Naive thymus-derived CD4-positive, alpha-beta T cell (primary cell): ENCODE measurements at regions of chr11 and their contacts with region 1.

Region 1: DNA sequence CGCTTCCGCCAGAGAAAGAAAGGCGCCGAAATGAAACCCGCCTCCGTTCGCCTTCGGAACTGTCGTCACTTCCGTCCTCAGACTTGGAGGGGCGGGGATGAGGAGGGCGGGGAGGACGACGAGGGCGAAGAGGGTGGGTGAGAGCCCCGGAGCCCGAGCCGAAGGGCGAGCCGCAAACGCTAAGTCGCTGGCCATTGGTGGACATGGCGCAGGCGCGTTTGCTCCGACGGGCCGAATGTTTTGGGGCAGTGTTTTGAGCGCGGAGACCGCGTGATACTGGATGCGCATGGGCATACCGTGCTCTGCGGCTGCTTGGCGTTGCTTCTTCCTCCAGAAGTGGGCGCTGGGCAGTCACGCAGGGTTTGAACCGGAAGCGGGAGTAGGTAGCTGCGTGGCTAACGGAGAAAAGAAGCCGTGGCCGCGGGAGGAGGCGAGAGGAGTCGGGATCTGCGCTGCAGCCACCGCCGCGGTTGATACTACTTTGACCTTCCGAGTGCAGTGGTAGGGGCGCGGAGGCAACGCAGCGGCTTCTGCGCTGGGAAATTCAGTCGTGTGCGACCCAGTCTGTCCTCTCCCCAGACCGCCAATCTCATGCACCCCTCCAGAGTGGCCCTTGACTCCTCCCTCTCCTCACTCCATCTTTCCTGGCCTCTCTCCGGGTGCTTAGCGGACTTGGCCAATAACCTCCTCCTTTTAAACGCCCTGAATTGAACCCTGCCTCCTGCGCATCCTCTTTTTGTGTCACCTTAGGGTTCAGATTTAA is at the start of gene ATM:
- DNase-seq: peak; percentile 94 to 99 (median 98)
- ATAC-seq: peak; percentile 91
- H3K4me3 ChIP-seq: peak within 1 kb of the TSS; percentile 93
- H3K4me3 Mint-ChIP-seq: no peak within 1 kb of the TSS
- H3K27ac ChIP-seq: peak within 1 kb of the TSS; percentile 98
- H3K27ac Mint-ChIP-seq: no peak within 1 kb of the TSS
- H3K4me1 ChIP-seq: peaks cover 26 to 31% of the 10 kb centered on the region in 2 donors
- H3K4me1 Mint-ChIP-seq: peaks cover 32 to 57% (median 37%) of the 10 kb centered on the region in 7 donors
- H3K27me3 ChIP-seq: no peaks in the 10 kb centered on the region
- H3K27me3 Mint-ChIP-seq: no peaks in the 10 kb centered on the region
- total RNA-seq, gene ATM: 183 to 879 (median 440) TPM

Region 2: GRCh38 chr11:107565219-107565937 is 657.5 kb before region 1 on chr11 and contains the start of gene ALKBH8:
- CTCF ChIA-PET with region 1: no interaction called
- POLR2A ChIA-PET with region 1: no interaction called
- intact Hi-C with region 1: loop called (anchors 5 to 10 kb)
- DNase-seq: peak; percentile 50 to 77 (median 75)
- ATAC-seq: peak; percentile 96
- H3K4me3 ChIP-seq: peak within 1 kb of the TSS; percentile 98
- H3K4me3 Mint-ChIP-seq: peak within 1 kb of the TSS; percentile 87 to 98 (median 94)
- H3K27ac ChIP-seq: peak within 1 kb of the TSS; percentile 73
- H3K27ac Mint-ChIP-seq: peak within 1 kb of the TSS; percentile 87 to 97 (median 90)
- H3K4me1 ChIP-seq: peaks cover 8 to 20% of the 10 kb centered on the region in 2 donors
- H3K4me1 Mint-ChIP-seq: peaks cover 28 to 70% (median 58%) of the 10 kb centered on the region in 7 donors
- H3K27me3 ChIP-seq: no peaks in the 10 kb centered on the region
- H3K27me3 Mint-ChIP-seq: peaks cover 0 to 3% (median 0%) of the 10 kb centered on the region in 5 donors
- total RNA-seq, gene ALKBH8: 9.5 to 19.1 (median 12.6) TPM

Region 3: GRCh38 chr11:107747622-107748021 is 475.2 kb before region 1 on chr11:
- CTCF ChIA-PET with region 1: no interaction called
- POLR2A ChIA-PET with region 1: no interaction called
- intact Hi-C with region 1: no loop called
- DNase-seq: no peak
- ATAC-seq: no peak
- H3K4me3 ChIP-seq: no peak overlapping the region
- H3K4me3 Mint-ChIP-seq: no peak overlapping the region
- H3K27ac ChIP-seq: no peak overlapping the region
- H3K27ac Mint-ChIP-seq: no peak overlapping the region
- H3K4me1 ChIP-seq: no peaks in the 10 kb centered on the region
- H3K4me1 Mint-ChIP-seq: peaks cover 0 to 3% (median 0%) of the 10 kb centered on the region in 7 donors
- H3K27me3 ChIP-seq: no peaks in the 10 kb centered on the region
- H3K27me3 Mint-ChIP-seq: peaks cover 24 to 54% (median 37%) of the 10 kb centered on the region in 5 donors

Region 4: GRCh38 chr11:108084811-108085210 is 138.1 kb before region 1 on chr11:
- CTCF ChIA-PET with region 1: no interaction called
- POLR2A ChIA-PET with region 1: no interaction called
- intact Hi-C with region 1: no loop called
- DNase-seq: no peak
- ATAC-seq: no peak
- H3K4me3 ChIP-seq: no peak overlapping the region
- H3K4me3 Mint-ChIP-seq: no peak overlapping the region
- H3K27ac ChIP-seq: no peak overlapping the region
- H3K27ac Mint-ChIP-seq: no peak overlapping the region
- H3K4me1 ChIP-seq: no peaks in the 10 kb centered on the region
- H3K4me1 Mint-ChIP-seq: peaks cover 0 to 4% (median 2%) of the 10 kb centered on the region in 7 donors
- H3K27me3 ChIP-seq: no peaks in the 10 kb centered on the region
- H3K27me3 Mint-ChIP-seq: no peaks in the 10 kb centered on the region

Region 5: DNA sequence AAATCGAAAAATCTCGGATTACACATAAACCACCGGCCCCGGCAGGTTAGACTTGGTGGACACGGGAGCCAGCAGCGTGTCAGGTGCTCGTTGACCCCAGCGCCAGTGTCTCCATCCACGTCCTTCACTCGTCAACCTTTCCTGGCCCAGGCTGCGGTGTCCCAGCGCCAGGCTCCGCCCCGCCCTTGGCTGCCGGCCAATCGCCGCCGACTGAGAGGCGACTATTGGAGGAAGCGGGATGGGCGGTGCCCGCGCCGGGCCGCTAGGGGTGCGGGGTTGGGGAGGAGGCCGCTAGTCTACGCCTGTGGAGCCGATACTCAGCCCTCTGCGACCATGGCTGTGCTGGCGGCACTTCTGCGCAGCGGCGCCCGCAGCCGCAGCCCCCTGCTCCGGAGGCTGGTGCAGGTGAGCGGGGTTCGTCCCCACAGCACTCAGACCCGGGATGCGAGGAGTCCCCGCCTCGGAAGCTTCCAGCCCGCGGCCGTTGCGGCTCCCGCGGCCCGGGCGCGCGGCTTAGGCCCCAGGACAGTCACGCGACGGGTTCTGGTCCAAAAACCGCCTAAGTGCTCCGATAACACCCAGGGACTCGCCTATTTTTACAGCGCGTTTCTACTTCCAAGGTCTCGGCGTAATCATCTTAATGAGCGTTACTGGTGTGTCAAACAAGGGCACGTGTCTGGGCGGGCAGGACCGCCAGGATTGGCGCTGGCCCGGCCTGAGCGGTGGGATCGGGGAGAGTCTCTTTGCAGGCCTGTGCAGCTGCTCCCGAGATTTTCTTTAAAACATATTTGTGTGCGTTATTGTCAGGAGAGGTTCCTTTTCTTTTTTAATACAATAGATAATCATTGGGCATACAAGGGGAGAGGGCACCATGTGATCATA is 101.4 kb before region 1 on chr11 and contains the start of gene ACAT1:
- CTCF ChIA-PET with region 1: no interaction called
- POLR2A ChIA-PET with region 1: interaction called, 3 read pairs
- intact Hi-C with region 1: loop called (anchors 1 kb)
- DNase-seq: peak; percentile 91 to 98 (median 94)
- ATAC-seq: peak; percentile 100
- H3K4me3 ChIP-seq: peak within 1 kb of the TSS; percentile 88
- H3K4me3 Mint-ChIP-seq: peak within 1 kb of the TSS; percentile 81 to 97 (median 94)
- H3K27ac ChIP-seq: peak within 1 kb of the TSS; percentile 66
- H3K27ac Mint-ChIP-seq: peak within 1 kb of the TSS; percentile 61 to 93 (median 85)
- H3K4me1 ChIP-seq: peaks cover 16 to 20% of the 10 kb centered on the region in 2 donors
- H3K4me1 Mint-ChIP-seq: peaks cover 35 to 49% (median 41%) of the 10 kb centered on the region in 7 donors
- H3K27me3 ChIP-seq: no peaks in the 10 kb centered on the region
- H3K27me3 Mint-ChIP-seq: no peaks in the 10 kb centered on the region
- total RNA-seq, gene ACAT1: 13.0 to 40.2 (median 17.9) TPM

Region 6: GRCh38 chr11:108237058-108237481 is 14.2 kb after region 1 on chr11:
- CTCF ChIA-PET with region 1: interaction called, 104 read pairs
- POLR2A ChIA-PET with region 1: interaction called, 779 read pairs
- intact Hi-C with region 1: loop called (anchors 1 kb)
- DNase-seq: peak in 4 of 9 donors; percentile 31 to 63 (median 50)
- ATAC-seq: peak; percentile 51
- H3K4me3 ChIP-seq: peak overlapping the region; percentile 50
- H3K4me3 Mint-ChIP-seq: peak overlapping the region in 9 of 10 donors; percentile 54 to 89 (median 82)
- H3K27ac ChIP-seq: peak overlapping the region; percentile 74
- H3K27ac Mint-ChIP-seq: peak overlapping the region in 7 of 9 donors; percentile 81 to 97 (median 95)
- H3K4me1 ChIP-seq: peaks cover 75 to 94% of the 10 kb centered on the region in 2 donors
- H3K4me1 Mint-ChIP-seq: peaks cover 53 to 95% (median 79%) of the 10 kb centered on the region in 7 donors
- H3K27me3 ChIP-seq: no peaks in the 10 kb centered on the region
- H3K27me3 Mint-ChIP-seq: no peaks in the 10 kb centered on the region

Region 7: DNA sequence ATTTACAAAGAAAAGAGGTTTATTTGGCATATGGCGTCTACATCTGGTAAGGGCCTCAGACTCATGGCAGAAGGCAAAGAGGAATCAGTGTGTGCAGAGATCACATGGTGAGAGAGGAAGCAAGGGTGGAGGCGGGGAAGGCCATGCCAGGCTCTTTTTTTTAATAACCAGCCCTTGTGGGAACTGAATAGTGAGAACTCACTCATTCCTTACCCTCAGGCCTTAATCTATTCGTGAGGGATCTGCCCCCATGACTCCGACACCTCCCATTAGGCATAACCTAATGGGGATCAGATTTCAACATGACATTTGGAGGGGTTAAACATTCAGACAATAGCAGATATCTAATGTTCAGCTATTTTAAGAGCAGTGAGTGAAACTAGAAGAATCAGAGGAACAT is 55.7 kb after region 1 on chr11:
- CTCF ChIA-PET with region 1: interaction called, 5 read pairs
- POLR2A ChIA-PET with region 1: interaction called, 56 read pairs
- intact Hi-C with region 1: loop called (anchors 1 to 2 kb)
- DNase-seq: no peak
- ATAC-seq: no peak
- H3K4me3 ChIP-seq: no peak overlapping the region
- H3K4me3 Mint-ChIP-seq: peak overlapping the region in 8 of 10 donors; percentile 1 to 68 (median 46)
- H3K27ac ChIP-seq: peak overlapping the region; percentile 37
- H3K27ac Mint-ChIP-seq: peak overlapping the region in 8 of 9 donors; percentile 5 to 90 (median 86)
- H3K4me1 ChIP-seq: peaks cover 0 to 42% of the 10 kb centered on the region in 2 donors
- H3K4me1 Mint-ChIP-seq: peaks cover 25 to 85% (median 79%) of the 10 kb centered on the region in 7 donors
- H3K27me3 ChIP-seq: no peaks in the 10 kb centered on the region
- H3K27me3 Mint-ChIP-seq: no peaks in the 10 kb centered on the region

Region 8: GRCh38 chr11:108393046-108393445 is 170.2 kb after region 1 on chr11:
- CTCF ChIA-PET with region 1: no interaction called
- POLR2A ChIA-PET with region 1: no interaction called
- intact Hi-C with region 1: no loop called
- DNase-seq: no peak
- ATAC-seq: no peak
- H3K4me3 ChIP-seq: no peak overlapping the region
- H3K4me3 Mint-ChIP-seq: no peak overlapping the region
- H3K27ac ChIP-seq: no peak overlapping the region
- H3K27ac Mint-ChIP-seq: no peak overlapping the region
- H3K4me1 ChIP-seq: no peaks in the 10 kb centered on the region
- H3K4me1 Mint-ChIP-seq: no peaks in the 10 kb centered on the region
- H3K27me3 ChIP-seq: no peaks in the 10 kb centered on the region
- H3K27me3 Mint-ChIP-seq: no peaks in the 10 kb centered on the region

Region 9: GRCh38 chr11:108467091-108467823 is 244.4 kb after region 1 on chr11 and contains the start of gene C11orf65:
- CTCF ChIA-PET with region 1: no interaction called
- POLR2A ChIA-PET with region 1: interaction called, 3 read pairs
- intact Hi-C with region 1: loop called (anchors 1 kb)
- DNase-seq: peak; percentile 88 to 97 (median 94)
- ATAC-seq: peak; percentile 98
- H3K4me3 ChIP-seq: peak within 1 kb of the TSS; percentile 81
- H3K4me3 Mint-ChIP-seq: peak within 1 kb of the TSS; percentile 93 to 100 (median 98)
- H3K27ac ChIP-seq: peak within 1 kb of the TSS; percentile 93
- H3K27ac Mint-ChIP-seq: peak within 1 kb of the TSS; percentile 98 to 100 (median 100)
- H3K4me1 ChIP-seq: peaks cover 3 to 5% of the 10 kb centered on the region in 2 donors
- H3K4me1 Mint-ChIP-seq: peaks cover 0 to 27% (median 17%) of the 10 kb centered on the region in 7 donors
- H3K27me3 ChIP-seq: no peaks in the 10 kb centered on the region
- H3K27me3 Mint-ChIP-seq: no peaks in the 10 kb centered on the region
- total RNA-seq, gene C11orf65: 0.27 to 1.5 (median 0.51) TPM

Region 10: DNA sequence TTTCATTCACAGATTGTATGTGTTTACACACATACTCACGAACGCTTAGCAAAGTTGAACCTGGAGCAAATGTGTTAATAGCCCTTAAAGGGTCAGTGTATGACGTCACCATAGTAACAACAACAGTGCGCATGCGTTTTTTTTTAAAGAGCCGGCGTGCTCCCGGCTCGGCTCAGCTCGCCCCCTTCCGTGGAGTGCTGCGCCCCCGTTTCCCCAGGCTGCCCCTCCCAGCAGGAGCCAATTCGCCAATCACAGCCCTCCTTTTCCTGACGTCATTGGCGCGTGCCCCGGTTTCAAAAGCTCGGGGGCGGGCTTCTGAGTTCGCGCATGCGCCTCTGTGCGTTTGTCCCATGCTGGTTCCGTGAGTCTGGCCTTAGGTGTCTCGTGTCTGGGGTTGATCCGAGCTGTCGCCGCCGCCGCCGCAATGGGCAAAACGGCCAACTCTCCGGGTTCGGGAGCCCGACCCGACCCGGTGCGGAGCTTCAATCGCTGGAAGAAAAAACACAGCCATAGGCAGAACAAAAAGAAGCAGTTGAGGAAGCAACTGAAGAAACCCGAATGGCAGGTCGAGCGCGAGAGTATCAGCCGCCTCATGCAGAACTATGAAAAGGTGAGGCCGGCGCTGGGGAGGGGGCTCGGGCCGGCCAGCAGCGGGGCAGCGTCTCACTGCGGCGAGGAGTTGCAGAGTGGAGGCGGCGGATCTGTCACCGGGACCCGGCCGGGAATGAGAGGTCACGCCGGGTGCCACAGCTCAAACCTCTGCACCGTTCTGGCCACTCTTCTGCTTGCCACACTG is 442.1 kb after region 1 on chr11 and contains the start of gene DDX10:
- CTCF ChIA-PET with region 1: no interaction called
- POLR2A ChIA-PET with region 1: no interaction called
- intact Hi-C with region 1: loop called (anchors 1 to 2 kb)
- DNase-seq: peak; percentile 95 to 99 (median 98)
- ATAC-seq: peak; percentile 99
- H3K4me3 ChIP-seq: peak within 1 kb of the TSS; percentile 80
- H3K4me3 Mint-ChIP-seq: peak within 1 kb of the TSS; percentile 91 to 100 (median 100)
- H3K27ac ChIP-seq: peak within 1 kb of the TSS; percentile 77
- H3K27ac Mint-ChIP-seq: peak within 1 kb of the TSS; percentile 79 to 100 (median 97)
- H3K4me1 ChIP-seq: peaks cover 18 to 22% of the 10 kb centered on the region in 2 donors
- H3K4me1 Mint-ChIP-seq: peaks cover 24 to 56% (median 47%) of the 10 kb centered on the region in 7 donors
- H3K27me3 ChIP-seq: no peaks in the 10 kb centered on the region
- H3K27me3 Mint-ChIP-seq: peaks cover 0 to 9% (median 0%) of the 10 kb centered on the region in 5 donors
- total RNA-seq, gene DDX10: 16.7 to 34.6 (median 22.8) TPM